AG04449 (cell line): ENCODE measurements at regions of chr10 and their contacts with region 1.

Region 1: GRCh38 chr10:15725603-15726002 is 5.9 kb upstream of the ITGA8 start:
- DNase-seq: no peak
- H3K4me3 ChIP-seq: no peak overlapping the region
- CTCF ChIP-seq: peak; percentile 58

Region 2: GRCh38 chr10:15433850-15434537 is 291.6 kb before region 1 on chr10:
- CTCF ChIA-PET with region 1: interaction called, 569 read pairs
- POLR2A ChIA-PET with region 1: no interaction called
- DNase-seq: no peak
- H3K4me3 ChIP-seq: peak overlapping the region; percentile 56
- CTCF ChIP-seq: peak; percentile 36

Region 3: DNA sequence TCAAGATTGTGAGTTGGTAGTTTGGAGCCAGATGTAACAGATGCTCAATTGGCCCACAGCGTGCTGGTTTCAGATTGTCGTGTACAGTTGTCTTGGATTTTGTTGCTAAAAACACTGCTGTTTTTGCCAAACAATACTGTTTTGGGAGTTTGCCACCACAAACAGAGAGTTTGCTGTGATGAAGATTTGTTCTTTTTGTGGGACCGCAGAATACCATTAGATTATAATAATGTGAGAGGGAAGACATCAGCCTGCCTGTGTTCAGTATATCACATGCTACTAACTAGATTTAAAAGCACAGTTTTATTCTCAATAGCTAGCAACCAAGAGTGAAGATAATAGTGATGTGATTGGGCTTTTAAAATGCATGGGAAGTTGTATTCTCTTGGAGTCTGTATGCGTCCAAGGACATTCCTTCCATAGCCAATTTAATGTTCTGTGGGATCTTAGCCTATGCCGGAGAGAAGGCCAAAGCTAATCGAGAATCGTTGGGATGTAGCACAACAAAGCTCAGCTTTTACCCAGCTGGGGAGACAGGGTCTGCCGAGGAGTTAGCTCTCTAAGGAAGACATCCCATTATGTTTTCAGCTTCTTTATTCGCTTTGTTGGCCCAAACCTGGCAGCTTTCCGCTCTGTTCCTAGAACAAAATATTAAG is 12.8 kb after region 1 on chr10:
- CTCF ChIA-PET with region 1: interaction called, 31 read pairs
- POLR2A ChIA-PET with region 1: no interaction called
- DNase-seq: no peak
- H3K4me3 ChIP-seq: no peak overlapping the region
- CTCF ChIP-seq: no peak

Region 4: DNA sequence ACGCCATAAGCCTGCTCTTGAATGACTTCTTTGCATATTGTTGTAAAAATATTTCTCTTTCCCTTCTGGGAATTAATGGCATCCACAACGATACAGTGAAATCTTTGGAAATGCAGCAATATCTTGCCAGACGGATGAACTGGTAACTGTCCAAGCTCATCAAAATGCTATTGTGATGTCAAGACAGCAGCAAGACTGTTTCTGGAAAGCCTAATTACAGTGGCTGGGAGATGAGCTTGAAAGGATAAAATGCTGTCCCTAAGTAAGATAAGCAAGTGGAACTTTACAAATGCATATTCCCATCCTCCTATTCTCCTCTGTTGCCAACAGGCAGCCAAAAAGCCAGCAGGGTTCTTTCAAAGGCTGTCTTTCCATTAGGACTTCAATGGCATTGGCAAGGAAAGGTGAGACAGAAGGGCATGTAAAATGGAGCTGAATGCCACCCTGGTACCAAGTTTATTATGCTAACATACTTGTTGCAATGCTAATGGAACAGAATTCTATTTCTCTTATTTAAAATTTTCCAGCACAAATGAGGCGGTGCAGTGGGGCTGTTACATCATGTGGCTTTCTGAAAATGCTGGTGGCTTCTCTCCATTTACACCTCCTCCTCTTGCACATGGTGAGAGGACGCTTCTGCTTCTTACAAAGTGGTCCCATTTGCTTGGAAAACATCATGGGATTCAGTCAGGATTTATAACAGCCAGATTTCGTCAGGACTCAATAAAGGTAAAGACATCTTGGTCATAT is 532.9 kb after region 1 on chr10:
- CTCF ChIA-PET with region 1: no interaction called
- POLR2A ChIA-PET with region 1: no interaction called
- DNase-seq: no peak
- H3K4me3 ChIP-seq: no peak overlapping the region
- CTCF ChIP-seq: no peak